ENCODE measurements at regions of chr17 and their contacts with region 1.

Region 1: GRCh38 chr17:28612936-28613872 is 781 bp downstream of the RSKR start:
- DNase-seq: no peak
- ATAC-seq: no peak
- H3K4me3 ChIP-seq: no peak overlapping the region
- H3K27ac ChIP-seq: no peak overlapping the region
- H3K4me1 ChIP-seq: no peaks in the 10 kb centered on the region
- H3K27me3 ChIP-seq: no peaks in the 10 kb centered on the region
- CTCF ChIP-seq: peak in 4 of 5 experiments; percentile 33 to 60 (median 40)
- POLR2A ChIP-seq: no peak

Region 2: DNA sequence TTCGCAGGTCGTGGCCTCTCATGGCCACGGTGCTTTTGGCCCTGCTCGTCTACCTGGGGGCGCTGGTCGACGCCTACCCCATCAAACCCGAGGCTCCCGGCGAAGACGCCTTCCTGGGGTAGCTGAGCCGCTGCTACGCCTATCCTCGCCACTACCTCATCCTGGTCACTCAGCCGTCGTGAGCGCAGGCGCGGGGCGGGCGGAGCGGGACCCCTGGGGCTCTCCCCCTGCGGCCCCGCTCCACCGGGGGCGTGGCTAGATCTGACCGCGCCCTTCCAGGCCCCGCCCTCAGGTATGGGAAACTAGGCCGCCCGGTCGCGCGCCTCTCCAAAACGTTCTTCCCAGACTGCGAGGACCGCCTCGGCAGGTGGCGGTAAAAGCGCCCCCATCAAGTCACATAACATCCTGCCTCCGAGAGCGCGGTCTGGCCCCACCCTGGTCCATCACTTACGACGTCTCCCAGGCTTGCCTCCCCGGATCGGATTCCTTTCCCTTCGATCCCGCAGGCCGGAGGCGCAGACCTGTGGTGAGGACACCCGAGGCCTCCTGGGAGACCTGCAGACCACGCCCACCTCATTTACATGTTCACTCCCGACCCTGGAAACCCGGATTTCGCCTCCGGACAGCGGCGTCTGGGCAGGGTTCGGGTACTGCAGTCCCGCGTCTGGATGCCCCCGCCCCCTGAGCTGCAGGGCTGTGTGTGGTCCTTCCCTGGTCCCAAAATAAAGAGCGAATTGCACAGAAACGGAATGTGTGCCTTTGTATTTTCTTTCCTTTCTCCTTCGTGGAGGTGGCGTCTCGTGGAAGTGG is 385.7 kb before region 1 on chr17:
- in situ Hi-C with region 1: no loop called
- intact Hi-C with region 1: loop called (anchors 10 kb)
- DNase-seq: no peak
- ATAC-seq: no peak
- H3K4me3 ChIP-seq: peak overlapping the region; percentile 17 to 36 (median 30)
- H3K27ac ChIP-seq: no peak overlapping the region
- H3K4me1 ChIP-seq: peaks cover 0 to 5% of the 10 kb centered on the region in 2 donors
- H3K27me3 ChIP-seq: peaks cover 38 to 50% (median 42%) of the 10 kb centered on the region in 3 donors
- CTCF ChIP-seq: no peak
- POLR2A ChIP-seq: no peak

Region 3: GRCh38 chr17:28494445-28495188 is 118.6 kb before region 1 on chr17:
- in situ Hi-C with region 1: loop called in 1 of 4 experiments (anchors 10 kb)
- intact Hi-C with region 1: loop called (anchors 1 kb)
- DNase-seq: peak; percentile 9 to 34
- ATAC-seq: peak; percentile 60 to 69
- H3K4me3 ChIP-seq: no peak overlapping the region
- H3K27ac ChIP-seq: no peak overlapping the region
- H3K4me1 ChIP-seq: no peaks in the 10 kb centered on the region
- H3K27me3 ChIP-seq: no peaks in the 10 kb centered on the region
- CTCF ChIP-seq: peak; percentile 44 to 78 (median 63)
- POLR2A ChIP-seq: no peak

Measured in gastrocnemius medialis (tissue), 4 donors.